ENCODE measurements at regions of chr2 and their contacts with region 1.

Region 1: DNA sequence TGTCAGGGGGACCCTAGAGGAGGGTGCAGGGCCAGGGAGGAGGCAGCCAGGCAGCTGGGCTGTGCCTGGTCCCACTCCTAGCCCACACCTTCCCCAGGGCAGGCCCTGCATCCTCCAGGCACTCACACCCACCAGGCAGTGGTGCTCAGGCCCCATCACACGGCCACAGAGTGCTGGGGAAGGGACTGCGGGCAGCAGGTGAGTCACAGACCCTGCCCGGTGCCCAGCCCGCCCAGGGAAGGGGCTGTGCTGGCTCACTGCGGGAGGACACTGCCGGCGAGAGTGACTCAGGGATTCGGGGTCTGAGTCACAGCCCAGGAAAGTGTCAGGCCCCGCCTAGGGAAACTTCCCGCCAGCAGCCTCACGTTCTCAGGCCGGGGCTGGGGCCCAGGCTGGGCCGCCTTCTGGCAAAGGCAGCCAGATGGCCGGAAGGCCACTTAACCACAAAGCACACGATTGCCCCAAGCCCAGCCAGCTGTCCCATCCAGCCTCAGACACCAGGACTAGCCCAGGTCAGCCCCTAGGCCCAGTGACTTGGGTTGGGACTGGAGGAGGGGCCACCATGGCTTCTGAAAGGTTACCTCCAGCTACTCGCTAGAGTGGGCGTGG is 42.2 kb downstream of the BIN1 start:
- DNase-seq: peak in 7 of 9 experiments; percentile 39 to 70 (median 48)
- ATAC-seq: peak; percentile 57
- H3K4me3 ChIP-seq: no peak overlapping the region
- H3K4me3 Mint-ChIP-seq: no peak overlapping the region
- H3K27ac ChIP-seq: peak overlapping the region in 1 of 2 experiments; percentile 65
- H3K27ac Mint-ChIP-seq: peak overlapping the region; percentile 37
- H3K4me1 ChIP-seq: peaks cover 7% of the 10 kb centered on the region
- H3K4me1 Mint-ChIP-seq: peaks cover 18% of the 10 kb centered on the region
- H3K27me3 ChIP-seq: no peaks in the 10 kb centered on the region
- H3K27me3 Mint-ChIP-seq: no peaks in the 10 kb centered on the region
- CTCF ChIP-seq: no peak

Region 2: DNA sequence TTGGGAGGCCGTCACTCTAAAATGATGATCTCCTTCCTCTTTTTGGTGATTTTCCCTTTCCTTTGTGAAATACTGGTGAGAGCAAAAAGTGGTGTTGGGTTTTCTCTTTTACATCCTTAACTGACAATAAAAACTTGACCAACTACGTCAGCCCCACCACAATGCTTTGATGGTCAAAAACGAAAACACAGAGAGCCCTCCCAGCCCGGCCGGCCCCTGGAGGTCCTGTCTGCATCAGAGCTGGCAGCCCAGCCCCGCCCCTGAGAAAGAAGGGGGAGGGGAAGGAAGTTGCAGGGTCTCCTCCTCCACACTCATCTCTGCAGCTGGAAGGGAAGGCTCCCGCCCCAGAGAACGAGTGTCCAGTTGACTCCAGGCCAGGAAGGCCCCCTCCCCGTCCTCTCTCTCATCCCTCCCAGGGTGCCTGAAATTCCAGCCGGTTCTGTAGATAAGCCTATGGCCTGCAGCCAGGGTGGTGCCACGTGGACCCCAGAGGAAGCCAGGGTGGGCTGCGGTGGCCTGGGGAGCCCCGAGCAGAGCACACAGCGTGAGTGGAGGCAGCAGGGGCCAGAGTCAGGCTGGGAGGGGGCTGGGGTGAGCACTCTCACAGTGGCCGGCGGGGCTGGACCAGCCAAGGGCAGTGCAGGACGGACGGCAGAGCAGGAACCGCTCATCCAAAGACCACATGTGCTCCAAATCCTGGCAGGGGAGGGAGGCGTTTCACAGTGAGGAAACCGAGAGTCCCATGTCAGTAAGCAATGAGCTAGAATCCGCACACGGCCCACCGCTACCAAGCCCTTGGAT is 22.4 kb after region 1 on chr2:
- CTCF ChIA-PET with region 1: interaction called, 61 read pairs
- POLR2A ChIA-PET with region 1: interaction called, 6 read pairs
- intact Hi-C with region 1: no loop called
- DNase-seq: no peak
- ATAC-seq: no peak
- H3K4me3 ChIP-seq: no peak overlapping the region
- H3K4me3 Mint-ChIP-seq: no peak overlapping the region
- H3K27ac ChIP-seq: peak overlapping the region in 1 of 2 experiments; percentile 51
- H3K27ac Mint-ChIP-seq: peak overlapping the region; percentile 84
- H3K4me1 ChIP-seq: peaks cover 53% of the 10 kb centered on the region
- H3K4me1 Mint-ChIP-seq: peaks cover 49% of the 10 kb centered on the region
- H3K27me3 ChIP-seq: no peaks in the 10 kb centered on the region
- H3K27me3 Mint-ChIP-seq: no peaks in the 10 kb centered on the region
- CTCF ChIP-seq: no peak

Region 3: DNA sequence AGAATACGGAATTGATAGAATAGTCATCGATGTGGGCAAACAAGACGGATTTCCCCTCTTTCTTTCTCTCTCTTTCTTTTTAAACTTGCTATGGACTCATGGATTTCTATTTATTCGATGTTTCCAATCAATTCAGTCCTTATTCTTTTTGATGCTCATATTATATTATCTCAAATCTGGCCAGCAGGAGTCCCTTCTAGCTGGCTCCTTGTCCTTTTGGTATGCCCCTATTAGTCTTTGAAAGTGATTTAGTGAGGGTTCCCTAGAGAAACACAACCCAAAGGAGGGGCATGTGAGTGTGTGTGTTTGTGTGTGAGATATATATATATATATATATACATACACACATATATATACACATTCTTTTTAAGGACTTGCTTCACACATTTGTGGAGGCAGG is 65.7 kb after region 1 on chr2:
- CTCF ChIA-PET with region 1: interaction called, 15 read pairs
- POLR2A ChIA-PET with region 1: no interaction called
- intact Hi-C with region 1: no loop called
- DNase-seq: no peak
- ATAC-seq: no peak
- H3K4me3 ChIP-seq: no peak overlapping the region
- H3K4me3 Mint-ChIP-seq: no peak overlapping the region
- H3K27ac ChIP-seq: no peak overlapping the region
- H3K27ac Mint-ChIP-seq: no peak overlapping the region
- H3K4me1 ChIP-seq: no peaks in the 10 kb centered on the region
- H3K4me1 Mint-ChIP-seq: no peaks in the 10 kb centered on the region
- H3K27me3 ChIP-seq: no peaks in the 10 kb centered on the region
- H3K27me3 Mint-ChIP-seq: no peaks in the 10 kb centered on the region
- CTCF ChIP-seq: no peak

Region 4: DNA sequence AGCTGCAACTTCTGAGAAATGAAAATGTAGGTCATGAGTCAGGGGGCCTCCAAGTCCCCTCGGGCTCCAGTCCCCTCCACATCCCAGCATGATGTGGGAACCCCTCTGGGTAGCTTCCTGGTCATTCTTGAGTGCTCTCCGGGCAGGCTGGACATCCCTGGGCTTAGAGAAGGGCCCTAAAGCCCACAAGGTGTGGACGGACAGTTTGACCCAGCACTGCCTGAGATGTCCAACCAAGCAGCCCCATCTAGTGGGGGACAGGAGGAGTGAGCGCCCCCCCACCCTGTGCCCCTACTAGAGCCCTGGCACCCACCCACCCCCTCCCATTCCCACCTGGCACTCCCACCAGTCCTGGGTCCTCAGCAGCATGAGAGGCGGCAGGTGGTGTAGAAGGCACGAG is 109.4 kb after region 1 on chr2:
- CTCF ChIA-PET with region 1: interaction called, 15 read pairs
- POLR2A ChIA-PET with region 1: no interaction called
- intact Hi-C with region 1: loop called (anchors 1 to 5 kb)
- DNase-seq: peak in 3 of 9 experiments; percentile 12 to 31 (median 14)
- ATAC-seq: no peak
- H3K4me3 ChIP-seq: no peak overlapping the region
- H3K4me3 Mint-ChIP-seq: no peak overlapping the region
- H3K27ac ChIP-seq: no peak overlapping the region
- H3K27ac Mint-ChIP-seq: no peak overlapping the region
- H3K4me1 ChIP-seq: no peaks in the 10 kb centered on the region
- H3K4me1 Mint-ChIP-seq: no peaks in the 10 kb centered on the region
- H3K27me3 ChIP-seq: no peaks in the 10 kb centered on the region
- H3K27me3 Mint-ChIP-seq: peaks cover 2% of the 10 kb centered on the region
- CTCF ChIP-seq: no peak

Region 5: DNA sequence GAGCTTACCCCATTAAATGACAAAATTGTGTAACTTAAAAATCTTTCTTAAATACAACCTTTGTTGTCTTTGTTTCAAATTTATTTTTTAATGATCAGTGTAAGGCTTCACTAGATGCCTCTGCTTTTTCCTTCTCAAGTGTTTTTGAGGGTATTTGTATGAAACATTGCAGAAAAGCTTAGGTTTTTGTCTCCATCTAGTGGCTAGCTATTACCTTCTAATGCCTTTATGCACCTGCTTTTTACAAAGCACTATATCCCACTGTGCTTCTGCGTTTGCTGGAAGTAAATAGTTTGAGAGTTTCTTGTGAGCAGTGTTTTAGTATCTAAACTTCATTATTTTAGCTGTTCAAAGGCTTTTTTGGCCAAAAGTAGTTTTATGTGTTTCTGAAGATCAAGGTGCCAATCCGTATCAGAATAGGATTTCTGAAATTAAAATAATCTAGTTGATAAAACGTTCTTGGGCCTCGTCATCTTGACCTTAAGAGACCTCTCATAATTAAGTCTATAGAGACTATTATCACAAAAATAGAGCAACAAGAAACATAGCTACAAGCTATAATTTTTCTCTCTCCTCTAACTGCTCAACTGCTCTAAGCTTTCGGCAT is 414.6 kb after region 1 on chr2:
- CTCF ChIA-PET with region 1: no interaction called
- POLR2A ChIA-PET with region 1: no interaction called
- intact Hi-C with region 1: loop called (anchors 5 kb)
- DNase-seq: peak in 2 of 9 experiments; percentile 53 to 67
- ATAC-seq: peak; percentile 62
- H3K4me3 ChIP-seq: no peak overlapping the region
- H3K4me3 Mint-ChIP-seq: no peak overlapping the region
- H3K27ac ChIP-seq: no peak overlapping the region
- H3K27ac Mint-ChIP-seq: no peak overlapping the region
- H3K4me1 ChIP-seq: no peaks in the 10 kb centered on the region
- H3K4me1 Mint-ChIP-seq: no peaks in the 10 kb centered on the region
- H3K27me3 ChIP-seq: no peaks in the 10 kb centered on the region
- H3K27me3 Mint-ChIP-seq: no peaks in the 10 kb centered on the region
- CTCF ChIP-seq: peak; percentile 67

Measured in CD8-positive, alpha-beta T cell (primary cell).